Mammary epithelial cell (primary cell): ENCODE measurements at regions of chr7 and their contacts with region 1.

Region 1: DNA sequence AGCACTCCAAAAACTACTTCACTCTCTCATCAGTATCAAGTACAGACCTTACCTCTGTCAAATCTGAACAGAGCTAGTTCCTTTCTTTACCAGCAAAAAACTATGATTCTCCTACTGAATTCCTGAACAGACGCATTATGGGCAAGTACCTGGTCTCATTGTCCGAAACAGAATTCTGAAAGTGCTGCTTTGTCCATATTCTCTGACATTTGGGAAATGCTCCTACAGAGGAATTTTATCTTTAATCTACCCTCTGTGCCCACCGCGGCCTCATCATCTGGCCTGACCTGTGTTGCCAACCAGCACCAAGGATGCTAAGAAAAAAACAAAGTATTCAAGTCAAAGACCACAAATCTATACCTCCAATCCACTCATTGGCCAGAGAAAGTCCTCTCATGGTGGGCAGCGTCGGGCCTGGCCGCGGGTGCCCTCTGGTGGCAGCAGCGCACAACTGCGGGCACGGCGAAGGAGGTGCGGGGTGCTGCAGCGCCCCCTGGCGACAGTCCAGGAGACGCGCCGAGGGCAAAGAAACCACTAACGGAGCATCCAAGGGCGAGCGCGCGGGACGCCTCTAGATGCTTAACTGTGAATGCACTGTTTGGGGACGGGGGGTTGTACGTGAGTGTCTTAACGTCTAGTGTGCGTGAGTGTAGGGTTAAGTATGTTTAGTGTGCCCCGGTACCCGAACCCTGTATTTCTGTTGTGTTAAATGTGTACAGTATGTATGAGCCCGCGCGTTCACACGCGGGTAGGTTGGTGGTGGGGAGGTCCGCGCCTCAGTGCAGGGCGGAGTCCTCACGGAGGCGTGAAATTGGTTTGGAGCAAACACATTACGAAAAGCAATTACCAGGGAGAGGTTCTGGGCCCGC is 5.0 kb upstream of the GBX1 start:
- DNase-seq: peak; percentile 56
- H3K4me3 ChIP-seq: no peak overlapping the region
- H3K27ac ChIP-seq: no peak overlapping the region
- H3K4me1 ChIP-seq: no peaks in the 10 kb centered on the region
- H3K27me3 ChIP-seq: peaks cover 20% of the 10 kb centered on the region
- CTCF ChIP-seq: peak; percentile 100

Region 2: DNA sequence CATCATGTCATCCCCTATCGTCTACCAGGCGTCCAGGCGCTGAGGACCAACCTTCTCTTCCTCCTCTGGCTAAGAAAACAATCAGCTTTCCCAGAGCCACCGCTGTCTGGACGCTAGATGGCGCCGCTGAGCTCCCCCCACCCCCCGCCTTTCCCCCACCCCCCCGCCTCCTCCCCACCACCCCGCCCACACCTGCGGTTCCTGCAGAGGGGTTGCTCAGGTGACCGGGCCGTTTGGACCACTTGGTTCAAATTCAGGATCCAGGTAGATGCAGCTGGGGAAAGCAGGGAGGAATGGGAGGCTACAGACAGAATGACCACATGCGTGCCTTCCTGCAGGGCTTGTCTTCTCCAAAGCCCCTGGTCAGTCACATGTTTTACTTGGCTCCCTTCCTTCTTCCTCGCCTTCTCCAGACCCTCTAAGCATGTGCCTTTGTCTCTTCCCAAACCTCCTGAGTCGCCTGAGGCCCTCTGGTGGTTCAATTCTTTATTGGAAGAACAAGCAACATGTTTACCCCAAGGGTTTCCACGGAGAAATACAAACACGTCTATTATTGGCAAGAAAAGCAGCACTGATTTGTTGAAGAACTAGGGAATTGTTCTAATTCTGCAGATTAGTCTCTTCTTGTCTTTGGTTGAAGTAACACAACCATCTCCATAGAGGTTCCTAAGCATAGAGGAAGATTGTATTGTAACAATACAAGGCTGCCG is 295.5 kb before region 1 on chr7:
- CTCF ChIA-PET with region 1: no interaction called
- dilution Hi-C with region 1: no loop called
- in situ Hi-C with region 1: no loop called
- intact Hi-C with region 1: loop called (anchors 1 kb)
- DNase-seq: peak; percentile 69
- H3K4me3 ChIP-seq: no peak overlapping the region
- H3K27ac ChIP-seq: no peak overlapping the region
- H3K4me1 ChIP-seq: peaks cover 15% of the 10 kb centered on the region
- H3K27me3 ChIP-seq: no peaks in the 10 kb centered on the region
- CTCF ChIP-seq: peak; percentile 58 to 64

Region 3: GRCh38 chr7:150962553-150963399 is 209.7 kb before region 1 on chr7:
- CTCF ChIA-PET with region 1: no interaction called
- dilution Hi-C with region 1: no loop called
- in situ Hi-C with region 1: no loop called
- intact Hi-C with region 1: loop called (anchors 1 kb)
- DNase-seq: no peak
- H3K4me3 ChIP-seq: no peak overlapping the region
- H3K27ac ChIP-seq: no peak overlapping the region
- H3K4me1 ChIP-seq: peaks cover 6% of the 10 kb centered on the region
- H3K27me3 ChIP-seq: peaks cover 3% of the 10 kb centered on the region
- CTCF ChIP-seq: peak; percentile 90 to 93

Region 4: DNA sequence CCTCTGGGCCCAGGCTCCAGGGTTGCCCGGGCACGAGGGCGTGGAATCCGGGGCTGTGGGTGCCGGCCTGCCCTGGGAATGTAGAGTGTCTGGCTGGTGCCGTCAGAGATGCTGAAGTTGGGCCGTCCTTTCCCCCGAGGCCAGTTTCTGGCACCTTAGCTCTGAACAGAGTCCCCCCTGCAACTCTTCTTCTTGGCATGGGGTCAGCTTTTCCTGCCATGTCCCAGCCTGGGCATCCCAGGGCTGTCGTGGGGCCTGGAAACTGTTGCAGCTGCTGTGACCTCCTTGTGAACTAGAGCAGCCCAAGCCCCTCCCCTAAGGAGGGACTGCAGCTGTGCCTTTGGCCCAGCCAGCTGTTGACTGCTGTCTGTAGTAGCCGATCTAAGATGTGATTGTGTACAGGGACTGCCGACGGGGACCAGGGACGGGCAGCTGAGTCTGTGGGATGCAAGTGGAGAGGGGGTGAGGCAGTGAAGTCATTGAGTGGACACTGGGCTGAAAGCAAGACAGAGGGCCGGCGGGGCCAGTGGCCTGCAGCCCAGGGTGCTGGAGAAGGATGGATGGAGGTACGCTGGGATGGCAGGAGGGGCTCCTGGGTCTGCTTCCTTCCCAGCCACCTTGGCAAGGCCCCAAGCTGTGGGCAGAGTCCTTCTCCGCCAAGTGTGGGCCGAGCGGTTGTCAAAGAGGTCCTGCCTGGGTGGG is 40.8 kb before region 1 on chr7:
- CTCF ChIA-PET with region 1: no interaction called
- dilution Hi-C with region 1: loop called (anchors 5 kb)
- in situ Hi-C with region 1: no loop called
- intact Hi-C with region 1: no loop called
- DNase-seq: no peak
- H3K4me3 ChIP-seq: no peak overlapping the region
- H3K27ac ChIP-seq: no peak overlapping the region
- H3K4me1 ChIP-seq: no peaks in the 10 kb centered on the region
- H3K27me3 ChIP-seq: no peaks in the 10 kb centered on the region
- CTCF ChIP-seq: no peak

Region 5: DNA sequence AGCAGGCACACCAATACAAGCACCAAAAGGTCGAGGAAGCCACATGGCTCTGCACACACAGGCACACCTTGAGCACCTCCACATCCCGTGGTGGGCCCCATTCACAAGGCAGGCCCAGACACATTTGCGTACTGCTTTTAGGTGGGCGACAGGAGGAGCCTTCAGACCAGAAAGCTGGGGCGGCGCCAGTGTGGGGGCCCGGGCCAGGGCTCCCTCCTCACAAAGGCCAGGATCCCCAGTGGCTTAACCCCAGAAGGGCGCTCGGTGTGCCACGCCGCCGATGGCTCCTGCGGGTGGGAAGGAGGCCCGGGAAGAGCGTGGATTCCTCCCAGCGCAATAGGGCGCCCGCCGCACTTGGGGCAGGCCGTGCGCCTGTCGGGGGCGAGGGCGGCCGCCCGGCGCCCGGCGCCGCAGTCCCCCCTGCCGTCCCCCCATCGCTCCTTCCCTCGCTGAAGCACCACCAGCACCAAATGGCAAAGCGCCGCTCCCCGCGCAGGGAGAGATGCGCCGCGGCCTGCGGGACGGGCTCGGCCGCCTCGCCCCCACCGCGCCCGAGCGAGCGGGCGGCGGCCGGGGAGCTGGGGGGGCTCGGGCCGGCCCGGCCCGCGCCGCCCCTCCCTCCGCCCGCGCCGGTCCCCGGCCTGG is 78.9 kb after region 1 on chr7:
- CTCF ChIA-PET with region 1: no interaction called
- dilution Hi-C with region 1: loop called (anchors 5 kb)
- in situ Hi-C with region 1: no loop called
- intact Hi-C with region 1: no loop called
- DNase-seq: peak; percentile 33
- H3K4me3 ChIP-seq: peak overlapping the region in 2 of 3 experiments; percentile 42 to 50
- H3K27ac ChIP-seq: no peak overlapping the region
- H3K4me1 ChIP-seq: peaks cover 22% of the 10 kb centered on the region
- H3K27me3 ChIP-seq: peaks cover 2% of the 10 kb centered on the region
- CTCF ChIP-seq: no peak